ENCODE measurements at regions of chr16 and their contacts with region 1.

Region 1: DNA sequence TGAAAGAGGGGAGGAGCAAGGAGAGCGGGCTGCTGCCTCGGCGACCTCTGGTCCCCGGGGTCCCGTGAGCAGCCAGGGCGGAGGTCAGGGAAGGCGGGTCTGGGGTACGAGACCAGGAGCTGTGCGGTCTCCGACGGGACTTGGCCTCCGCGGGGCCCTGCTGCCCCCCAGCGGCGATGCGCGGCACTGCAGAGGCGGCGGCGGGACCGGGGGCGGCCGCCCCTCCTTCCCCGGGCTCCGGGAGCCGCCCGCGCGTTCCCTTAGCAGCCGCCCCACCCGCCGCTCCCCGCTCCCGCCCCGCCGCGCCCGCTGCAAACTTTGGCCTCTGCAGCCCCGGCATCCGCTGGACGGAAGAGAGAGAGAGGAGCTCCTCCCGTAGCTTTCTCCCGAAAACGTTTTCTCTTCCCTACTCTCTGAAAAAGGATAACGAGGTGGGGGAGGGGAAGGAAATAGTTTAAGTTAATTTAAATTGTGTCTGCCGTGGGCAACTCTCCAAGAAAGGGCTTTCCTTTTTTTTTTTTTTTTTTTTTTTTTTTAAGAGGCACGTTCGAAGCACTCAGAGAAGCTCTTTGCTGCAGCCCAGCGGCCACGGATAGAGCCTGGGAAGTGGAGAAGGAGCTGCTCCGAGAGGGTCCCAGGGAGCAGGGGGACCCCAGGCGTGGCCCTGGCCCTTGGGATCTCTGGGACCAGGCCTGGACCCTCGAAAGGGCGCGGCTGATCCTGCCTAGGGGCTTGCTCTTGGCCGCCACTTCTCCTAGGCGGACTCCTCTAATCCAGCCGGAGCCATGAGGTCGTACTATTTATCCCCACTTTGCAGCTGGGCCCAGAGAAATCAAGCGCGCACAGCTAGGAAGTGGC is 43.2 kb downstream of the C16orf82 start:
- DNase-seq: peak; percentile 44 to 55
- ATAC-seq: peak; percentile 85 to 88
- H3K4me3 ChIP-seq: peak overlapping the region; percentile 47
- H3K27ac ChIP-seq: peak overlapping the region; percentile 25 to 57; a peak in 2 of 6 replicates
- H3K4me1 ChIP-seq: 0 out of 3 replicates have a peak, but pooled peaks cover 3% of the 10 kb centered on the region
- CTCF ChIP-seq: peak; percentile 91
- EP300 ChIP-seq: no peak
- POLR2A ChIP-seq: no peak
- RAD21 ChIP-seq: peak; percentile 70 to 84

Region 2: DNA sequence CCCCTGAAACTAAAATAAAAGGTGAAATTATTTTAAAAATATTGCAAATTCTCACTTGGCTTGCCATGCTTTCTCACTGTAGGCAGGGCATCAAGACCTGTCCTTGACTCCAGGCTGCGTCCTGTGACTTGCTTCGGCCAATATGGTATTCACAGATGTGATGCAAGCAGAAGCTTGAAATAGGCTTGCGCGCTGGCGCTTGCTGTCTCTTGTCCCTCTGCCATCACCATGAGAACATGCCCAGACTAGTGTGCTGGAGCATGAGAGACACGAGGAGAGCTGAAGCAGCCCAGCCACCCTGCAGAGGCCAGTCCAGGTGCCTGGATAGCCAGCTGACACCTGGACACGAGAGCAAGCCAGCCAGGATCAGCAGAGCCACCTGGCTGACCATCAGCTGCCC is 1830.4 kb before region 1 on chr16:
- CTCF ChIA-PET with region 1: interaction called, 18 read pairs
- POLR2A ChIA-PET with region 1: no interaction called
- DNase-seq: no peak
- ATAC-seq: no peak
- H3K4me3 ChIP-seq: no peak overlapping the region
- H3K27ac ChIP-seq: no peak overlapping the region
- H3K4me1 ChIP-seq: no peaks in the 10 kb centered on the region
- CTCF ChIP-seq: no peak
- EP300 ChIP-seq: no peak
- POLR2A ChIP-seq: no peak
- RAD21 ChIP-seq: no peak

Region 3: GRCh38 chr16:25838724-25839186 is 1271.1 kb before region 1 on chr16:
- CTCF ChIA-PET with region 1: interaction called, 10 read pairs
- POLR2A ChIA-PET with region 1: no interaction called
- DNase-seq: peak; percentile 19 to 48
- ATAC-seq: peak in 1 of 2 experiments; percentile 75; a peak in 4 of 6 replicates
- H3K4me3 ChIP-seq: no peak overlapping the region
- H3K27ac ChIP-seq: no peak overlapping the region
- H3K4me1 ChIP-seq: no peaks in the 10 kb centered on the region
- CTCF ChIP-seq: peak; percentile 66
- EP300 ChIP-seq: no peak
- POLR2A ChIP-seq: no peak
- RAD21 ChIP-seq: peak; percentile 63 to 71; a peak in 4 of 5 replicates

Region 4: GRCh38 chr16:27097800-27098230 is 12.1 kb before region 1 on chr16:
- CTCF ChIA-PET with region 1: interaction called, 15 read pairs
- POLR2A ChIA-PET with region 1: no interaction called
- DNase-seq: no peak
- ATAC-seq: no peak
- H3K4me3 ChIP-seq: no peak overlapping the region
- H3K27ac ChIP-seq: no peak overlapping the region
- H3K4me1 ChIP-seq: no peaks in the 10 kb centered on the region
- CTCF ChIP-seq: no peak
- EP300 ChIP-seq: no peak
- POLR2A ChIP-seq: no peak
- RAD21 ChIP-seq: no peak

Region 5: GRCh38 chr16:27127308-27127707 is 17.4 kb after region 1 on chr16:
- CTCF ChIA-PET with region 1: interaction called, 11 read pairs
- POLR2A ChIA-PET with region 1: no interaction called
- DNase-seq: no peak
- ATAC-seq: no peak
- H3K4me3 ChIP-seq: no peak overlapping the region
- H3K27ac ChIP-seq: no peak overlapping the region
- H3K4me1 ChIP-seq: no peaks in the 10 kb centered on the region
- CTCF ChIP-seq: no peak
- EP300 ChIP-seq: no peak
- POLR2A ChIP-seq: no peak
- RAD21 ChIP-seq: no peak

Measured in A549 (cell line).